ENCODE measurements at regions of chr6 and their contacts with region 1.

Region 1: DNA sequence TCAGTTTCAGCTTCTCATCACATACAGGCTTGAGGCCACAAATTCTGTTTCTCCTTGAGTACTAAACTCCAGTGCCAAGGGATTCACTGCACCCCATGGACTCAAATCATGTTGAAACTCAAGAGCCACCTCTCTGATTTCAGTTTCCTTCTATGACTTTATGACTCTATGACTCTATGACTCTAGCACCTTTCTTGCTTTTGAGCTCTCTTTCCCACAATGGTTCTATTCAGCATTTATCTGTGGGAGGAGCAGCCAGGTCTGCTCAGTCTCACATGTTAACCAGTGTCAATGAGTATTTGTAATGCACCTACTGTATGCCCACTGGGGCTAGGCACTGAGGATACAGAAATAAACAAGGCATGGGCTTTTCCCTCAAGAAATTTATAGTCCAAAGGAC is 14.6 kb upstream of the SLC22A2 start:
- DNase-seq: no peak
- ATAC-seq: peak in 1 of 4 donors; percentile 23
- H3K4me3 ChIP-seq: no peak overlapping the region
- H3K27ac ChIP-seq: peak overlapping the region; percentile 36
- H3K4me1 ChIP-seq: peaks cover 21% of the 10 kb centered on the region
- H3K27me3 ChIP-seq: no peaks in the 10 kb centered on the region
- CTCF ChIP-seq: no peak

Region 2: GRCh38 chr6:160249671-160250070 is 23.5 kb before region 1 on chr6:
- intact Hi-C with region 1: loop called in 1 of 2 experiments (anchors 2 kb)
- DNase-seq: no peak
- ATAC-seq: no peak
- H3K4me3 ChIP-seq: no peak overlapping the region
- H3K27ac ChIP-seq: no peak overlapping the region
- H3K4me1 ChIP-seq: no peaks in the 10 kb centered on the region
- H3K27me3 ChIP-seq: no peaks in the 10 kb centered on the region
- CTCF ChIP-seq: no peak